ENCODE measurements at regions of chr4 and their contacts with region 1.

Region 1: GRCh38 chr4:42205541-42205940 is 53.1 kb upstream of the BEND4 start:
- DNase-seq: no peak
- H3K4me3 ChIP-seq: no peak overlapping the region
- CTCF ChIP-seq: no peak
- POLR2A ChIP-seq: no peak

Region 2: GRCh38 chr4:42132099-42132498 is 73.4 kb before region 1 on chr4:
- intact Hi-C with region 1: no loop called
- DNase-seq: no peak
- H3K4me3 ChIP-seq: no peak overlapping the region
- CTCF ChIP-seq: no peak
- POLR2A ChIP-seq: no peak

Region 3: GRCh38 chr4:42159271-42160001 is 46.1 kb before region 1 on chr4:
- intact Hi-C with region 1: no loop called
- DNase-seq: no peak
- H3K4me3 ChIP-seq: no peak overlapping the region
- CTCF ChIP-seq: no peak
- POLR2A ChIP-seq: no peak

Region 4: GRCh38 chr4:44210750-44211149 is 2005.2 kb after region 1 on chr4:
- intact Hi-C with region 1: loop called (anchors 10 kb)
- DNase-seq: no peak
- H3K4me3 ChIP-seq: no peak overlapping the region
- CTCF ChIP-seq: no peak
- POLR2A ChIP-seq: no peak